Breast epithelium (tissue), 4 donors: ENCODE measurements at regions of chr11 and their contacts with region 1.

Region 1: DNA sequence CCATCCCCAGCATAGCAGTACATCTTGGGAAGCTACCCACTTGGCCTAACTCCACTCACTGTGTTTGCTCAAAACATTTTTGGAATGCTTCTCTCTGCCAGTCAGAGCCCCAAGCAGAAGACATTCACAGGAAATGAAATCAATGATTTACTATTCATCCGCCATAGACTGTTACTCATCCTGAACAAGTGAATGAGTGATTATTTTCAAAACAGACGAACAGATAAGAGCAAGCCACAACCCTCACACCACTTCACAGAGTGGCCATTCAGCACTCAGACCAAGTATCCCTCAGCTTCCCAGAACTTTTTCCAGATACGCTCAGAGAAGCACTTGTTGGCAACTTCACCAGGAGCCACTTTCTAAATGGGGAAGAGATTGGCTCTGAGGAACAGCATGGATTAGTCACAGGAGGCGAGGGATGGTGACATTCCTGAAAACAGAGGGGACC is 13.0 kb upstream of the UBASH3B start:
- DNase-seq: no peak
- H3K4me3 ChIP-seq: no peak overlapping the region
- H3K27ac ChIP-seq: peak overlapping the region in 1 of 2 donors; percentile 38
- H3K4me1 ChIP-seq: no peaks in the 10 kb centered on the region
- H3K27me3 ChIP-seq: no peaks in the 10 kb centered on the region
- CTCF ChIP-seq: no peak
- POLR2A ChIP-seq: no peak

Region 2: DNA sequence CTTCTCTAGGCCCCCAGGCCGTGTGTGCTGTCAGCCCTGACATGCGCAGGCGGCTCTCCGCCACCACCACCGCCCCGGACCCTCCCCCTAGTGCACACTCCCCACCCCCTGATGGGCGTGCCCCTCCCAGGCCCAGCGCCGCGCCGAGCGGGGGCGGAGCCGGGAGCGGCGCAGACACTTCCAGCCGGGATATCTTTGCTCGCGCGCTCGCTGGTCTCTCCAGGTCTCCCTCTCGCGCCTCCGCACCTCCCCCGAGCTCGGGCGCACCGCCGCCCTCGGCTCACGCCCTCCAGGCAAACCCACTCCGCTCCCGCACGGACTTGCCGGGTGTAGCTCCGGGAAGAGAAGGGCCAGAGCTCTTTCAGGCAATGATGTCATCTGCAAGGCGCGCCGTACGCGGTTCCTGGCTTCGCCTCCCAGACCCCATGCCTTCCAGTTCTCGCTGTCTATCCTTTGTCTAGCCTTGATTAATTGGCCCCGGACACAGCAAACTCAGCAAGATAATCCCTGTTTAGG is 1012.1 kb after region 1 on chr11 and contains the start of gene SCN3B:
- intact Hi-C with region 1: loop called (anchors 10 kb)
- DNase-seq: peak; percentile 49 to 71
- H3K4me3 ChIP-seq: peak within 1 kb of the TSS; percentile 40 to 76 (median 62)
- H3K27ac ChIP-seq: peak within 1 kb of the TSS; percentile 66 to 74
- H3K4me1 ChIP-seq: no peaks in the 10 kb centered on the region
- H3K27me3 ChIP-seq: peaks cover 0 to 6% of the 10 kb centered on the region in 2 donors
- CTCF ChIP-seq: no peak
- POLR2A ChIP-seq: no peak
- total RNA-seq, gene SCN3B: 1.9 to 2.6 (median 1.9) TPM